Caco-2 (cell line): ENCODE measurements at regions of chr11 and their contacts with region 1.

Region 1: GRCh38 chr11:56783448-56784041 is 35.0 kb upstream of the OR9G4 start:
- DNase-seq: peak in 1 of 2 experiments; percentile 46
- H3K4me3 ChIP-seq: no peak overlapping the region
- H3K4me3 Mint-ChIP-seq: no peak overlapping the region
- H3K27ac Mint-ChIP-seq: no peak overlapping the region
- H3K4me1 ChIP-seq: no peaks in the 10 kb centered on the region
- H3K4me1 Mint-ChIP-seq: no peaks in the 10 kb centered on the region
- H3K27me3 ChIP-seq: no peaks in the 10 kb centered on the region
- H3K27me3 Mint-ChIP-seq: peaks cover 4% of the 10 kb centered on the region
- CTCF ChIP-seq: peak; percentile 51 to 63

Region 2: DNA sequence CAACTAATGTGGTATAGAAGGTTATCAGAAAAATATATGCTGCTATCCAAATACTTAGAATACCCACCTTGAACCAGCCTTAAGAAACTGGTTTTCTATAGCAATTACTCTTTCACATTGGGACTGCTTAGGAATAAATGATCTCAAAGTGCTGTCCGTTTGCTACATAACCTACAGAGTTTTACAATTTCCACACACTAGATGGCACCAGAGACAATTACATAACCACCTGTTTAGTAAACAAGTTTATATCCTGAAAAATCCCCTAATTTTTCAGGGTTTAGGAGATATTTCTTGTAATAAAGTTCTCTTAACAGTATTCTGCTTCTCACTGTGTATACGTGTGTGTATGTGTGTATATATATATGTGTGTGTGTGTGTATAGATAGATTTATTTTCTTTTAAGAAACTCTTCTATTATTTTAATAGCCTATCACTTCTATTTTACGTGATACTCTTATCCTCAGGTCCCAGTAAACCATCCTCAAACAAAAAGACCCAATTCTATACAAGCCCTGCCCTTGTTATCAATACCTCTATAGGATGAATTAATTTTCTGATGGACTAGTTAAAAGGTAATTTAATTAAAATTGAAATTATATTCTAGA is 840.7 kb before region 1 on chr11:
- CTCF ChIA-PET with region 1: no interaction called
- POLR2A ChIA-PET with region 1: no interaction called
- intact Hi-C with region 1: loop called (anchors 2 kb)
- DNase-seq: peak in 1 of 2 experiments; percentile 57
- H3K4me3 ChIP-seq: no peak overlapping the region
- H3K4me3 Mint-ChIP-seq: no peak overlapping the region
- H3K27ac Mint-ChIP-seq: no peak overlapping the region
- H3K4me1 ChIP-seq: peaks cover 5% of the 10 kb centered on the region; the same call in 1 of the 2 replicates
- H3K4me1 Mint-ChIP-seq: no peaks in the 10 kb centered on the region
- H3K27me3 ChIP-seq: no peaks in the 10 kb centered on the region
- H3K27me3 Mint-ChIP-seq: peaks cover 2% of the 10 kb centered on the region
- CTCF ChIP-seq: peak; percentile 55 to 65

Region 3: DNA sequence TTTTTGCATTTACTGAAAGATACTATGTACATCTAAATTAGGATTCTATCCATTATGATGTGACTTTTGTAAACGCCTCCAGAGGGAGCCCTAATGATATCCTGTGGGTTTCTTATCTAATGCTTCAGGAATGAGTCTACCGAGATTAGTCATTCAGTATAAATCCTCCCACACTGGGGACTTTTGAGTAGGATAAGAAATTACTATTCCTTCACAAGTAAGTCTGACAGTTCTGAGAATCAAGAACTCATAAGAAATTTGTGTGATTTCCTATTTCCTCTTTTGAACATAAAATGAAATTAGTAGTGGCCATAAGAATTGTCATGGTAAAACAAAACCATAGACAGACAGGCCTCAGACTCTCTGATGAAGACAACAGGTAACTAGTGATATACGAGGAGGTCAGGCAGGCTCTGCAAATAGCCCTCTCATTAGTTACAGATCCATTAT is 158.9 kb before region 1 on chr11:
- CTCF ChIA-PET with region 1: no interaction called
- POLR2A ChIA-PET with region 1: no interaction called
- intact Hi-C with region 1: loop called (anchors 1 kb)
- DNase-seq: peak; percentile 36 to 58
- H3K4me3 ChIP-seq: no peak overlapping the region
- H3K4me3 Mint-ChIP-seq: no peak overlapping the region
- H3K27ac Mint-ChIP-seq: no peak overlapping the region
- H3K4me1 ChIP-seq: no peaks in the 10 kb centered on the region
- H3K4me1 Mint-ChIP-seq: no peaks in the 10 kb centered on the region
- H3K27me3 ChIP-seq: no peaks in the 10 kb centered on the region
- H3K27me3 Mint-ChIP-seq: peaks cover 12% of the 10 kb centered on the region
- CTCF ChIP-seq: peak; percentile 36 to 67